Activated T-helper 2 cell treated with anti-CD3 and anti-CD28 coated beads, Interferon-gamma antibody, Interleukin-2, Interleukin-4, amounts not matched to agents 10 μg/mL and 5 μg/mL and 100 μg/mL, durations not matched to agents 14 hours and 24 hours and 36 hours (primary cell): ENCODE measurements at regions of chr4 and their contacts with region 1.

Region 1: DNA sequence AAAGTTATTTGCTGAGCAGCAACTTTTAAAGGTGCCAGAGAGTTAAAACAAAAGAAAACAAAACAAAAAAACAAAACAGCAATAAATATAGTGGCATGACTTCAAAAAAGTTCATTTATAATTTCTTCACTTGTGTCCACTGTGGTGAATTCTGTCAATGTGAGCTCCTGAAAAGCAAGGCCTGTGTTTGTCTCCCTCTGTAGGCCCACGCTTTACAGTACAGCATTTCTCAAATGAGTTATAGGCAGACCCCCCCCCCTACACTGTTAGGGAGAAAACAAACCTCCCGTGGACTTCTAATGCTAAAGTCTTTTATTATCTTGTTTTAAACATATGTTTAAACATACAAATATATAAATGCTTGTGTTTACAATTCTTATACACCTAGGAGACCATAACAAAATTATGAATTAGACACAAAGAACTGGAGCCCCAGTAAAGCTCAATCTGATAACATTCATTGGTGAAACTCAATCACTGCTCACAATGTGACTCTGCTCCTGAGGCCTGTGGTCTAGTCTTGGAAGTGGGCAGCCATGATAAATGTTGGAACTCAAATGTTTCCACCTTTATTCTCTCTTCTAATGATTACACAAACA is 47.0 kb upstream of the SCOC start:
- DNase-seq: no peak
- H3K4me3 Mint-ChIP-seq: no peak overlapping the region
- H3K27ac Mint-ChIP-seq: no peak overlapping the region
- H3K4me1 Mint-ChIP-seq: peaks cover 14% of the 10 kb centered on the region
- H3K27me3 Mint-ChIP-seq: peaks cover 34% of the 10 kb centered on the region

Region 2: DNA sequence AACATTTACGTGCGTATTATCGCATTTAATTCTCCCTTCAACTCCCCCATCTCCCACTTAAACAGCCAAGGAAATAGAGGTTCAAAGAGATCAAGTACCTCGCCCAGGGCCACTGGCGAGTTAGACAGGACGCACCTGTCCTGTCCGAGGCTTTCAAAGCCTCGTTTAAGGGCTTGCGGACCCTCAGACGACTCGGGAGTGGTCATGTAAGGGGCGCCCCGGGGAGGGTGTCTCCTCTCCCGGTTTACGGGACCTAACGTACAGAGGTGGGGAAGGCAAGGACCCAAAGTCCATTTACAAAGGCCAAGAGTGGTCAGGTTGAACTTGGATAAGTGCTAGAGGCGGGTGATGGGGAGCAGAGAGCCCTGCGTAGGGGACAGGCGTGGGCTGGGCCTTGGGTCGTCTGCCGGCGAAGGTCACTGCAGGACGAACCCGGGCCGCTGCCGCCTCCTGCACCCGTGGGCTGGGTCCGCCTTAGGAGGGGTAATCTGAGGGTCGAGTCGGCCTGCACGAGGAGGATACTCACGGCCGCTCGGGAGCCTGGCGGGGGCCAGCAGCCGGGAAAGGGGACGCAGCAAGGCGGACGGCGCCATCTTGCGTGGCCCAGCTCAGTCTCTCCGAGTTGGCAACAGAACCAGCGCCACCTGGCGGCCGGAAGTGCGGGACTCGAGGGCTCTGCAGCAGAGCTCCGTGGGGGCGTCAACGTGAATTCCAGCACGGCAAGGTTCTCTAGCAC is 1031.1 kb before region 1 on chr4:
- intact Hi-C with region 1: no loop called
- DNase-seq: peak; percentile 91
- H3K4me3 Mint-ChIP-seq: peak overlapping the region; percentile 96
- H3K27ac Mint-ChIP-seq: peak overlapping the region; percentile 96
- H3K4me1 Mint-ChIP-seq: peaks cover 28% of the 10 kb centered on the region
- H3K27me3 Mint-ChIP-seq: no peaks in the 10 kb centered on the region

Region 3: DNA sequence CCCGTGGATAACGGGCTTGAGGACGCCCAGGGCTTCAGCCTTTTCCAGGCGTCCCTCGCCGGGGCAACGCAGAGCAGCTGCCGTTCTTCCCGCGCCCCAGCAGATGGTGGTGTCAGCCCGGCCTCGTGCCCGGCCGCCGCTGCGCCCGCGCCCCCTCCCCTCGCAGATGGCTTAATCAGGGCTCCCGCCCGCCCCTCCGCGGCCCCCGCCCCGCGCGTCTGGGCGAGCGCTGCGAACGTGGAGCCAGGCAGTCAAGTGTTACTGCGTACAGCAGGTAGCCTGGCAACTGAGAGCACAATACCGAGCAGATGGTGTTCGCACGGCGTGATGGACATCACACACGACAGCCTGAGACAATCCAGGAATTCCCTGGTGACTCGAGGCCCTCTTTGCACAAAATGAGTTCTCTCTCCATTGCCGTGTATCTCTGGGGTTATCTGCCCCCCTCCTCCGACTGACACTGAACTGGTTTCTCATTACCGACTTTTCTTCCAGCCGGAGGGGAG is 591.6 kb before region 1 on chr4:
- intact Hi-C with region 1: loop called (anchors 10 kb)
- DNase-seq: peak; percentile 35
- H3K4me3 Mint-ChIP-seq: peak overlapping the region; percentile 49
- H3K27ac Mint-ChIP-seq: no peak overlapping the region
- H3K4me1 Mint-ChIP-seq: peaks cover 11% of the 10 kb centered on the region
- H3K27me3 Mint-ChIP-seq: peaks cover 54% of the 10 kb centered on the region

Region 4: DNA sequence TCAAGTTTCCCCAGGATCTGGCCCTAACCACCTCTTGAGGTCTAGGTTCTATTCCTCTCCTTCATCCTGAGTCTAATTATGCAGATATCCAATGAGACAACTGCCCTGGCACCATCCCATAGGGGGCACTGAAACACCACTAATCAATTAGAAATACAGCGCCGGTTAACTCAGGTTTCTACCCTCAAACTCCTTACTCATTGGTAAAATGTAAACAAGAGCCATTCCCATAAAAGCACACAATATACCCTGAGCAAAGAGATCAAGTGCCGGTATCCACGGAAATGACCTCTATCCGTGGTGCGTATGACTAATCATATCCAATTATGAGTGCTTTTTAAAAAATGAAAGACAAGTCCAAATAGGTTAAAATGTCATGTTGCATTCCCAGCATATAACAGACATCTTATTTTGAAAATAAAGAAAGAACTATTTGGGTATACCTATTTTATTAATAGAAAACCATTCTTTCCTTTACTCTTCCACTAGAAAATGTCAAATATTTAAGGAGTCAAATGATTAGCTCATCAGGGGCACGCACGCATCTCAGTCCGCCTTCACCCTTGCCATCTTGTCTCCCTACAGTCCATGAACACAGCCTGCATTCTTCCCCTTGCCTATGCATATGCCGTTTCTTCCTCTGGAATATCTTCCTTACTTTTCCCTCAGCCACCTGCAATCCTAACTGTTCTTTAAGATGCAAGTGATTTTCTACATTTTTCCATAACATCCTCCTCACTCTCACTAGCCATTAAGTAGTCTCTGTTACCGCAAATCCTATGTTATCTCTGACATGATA is 313.6 kb before region 1 on chr4:
- intact Hi-C with region 1: loop called (anchors 1 kb)
- DNase-seq: peak; percentile 29
- H3K4me3 Mint-ChIP-seq: no peak overlapping the region
- H3K27ac Mint-ChIP-seq: no peak overlapping the region
- H3K4me1 Mint-ChIP-seq: peaks cover 9% of the 10 kb centered on the region
- H3K27me3 Mint-ChIP-seq: peaks cover 42% of the 10 kb centered on the region